ENCODE measurements at regions of chr14 and their contacts with region 1.

Region 1: DNA sequence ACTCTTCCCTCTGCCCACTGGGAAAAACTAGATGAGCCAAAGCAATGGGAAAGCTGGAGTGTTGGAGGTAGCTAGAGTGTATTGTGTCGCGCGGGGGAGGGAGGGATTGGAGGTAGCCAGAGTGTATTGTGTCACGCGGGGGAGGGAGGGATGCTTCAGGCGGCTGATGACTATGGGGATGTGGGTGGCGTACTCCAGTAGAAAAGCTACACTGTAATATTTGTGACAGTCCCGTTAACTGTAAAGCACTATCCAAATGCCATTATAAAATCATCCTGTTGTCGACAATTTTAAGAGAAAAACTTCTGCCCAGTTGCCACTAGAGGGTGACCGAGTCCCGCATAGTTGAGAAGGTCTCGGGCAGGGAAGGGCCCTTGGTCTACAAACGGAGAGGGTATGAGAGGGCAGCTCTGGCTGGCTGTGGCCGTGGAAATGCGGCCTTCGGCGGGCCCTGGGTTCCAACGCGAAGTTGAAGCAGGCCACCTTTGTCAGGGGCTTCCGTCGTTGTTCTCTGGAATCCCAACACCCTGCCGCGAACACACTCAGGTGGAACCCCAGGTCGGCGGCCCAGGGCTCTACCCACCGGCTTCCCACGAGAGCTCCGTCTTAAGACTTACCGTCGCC is 15.1 kb upstream of the PLEK2 start:
- DNase-seq: peak; percentile 75 to 86 (median 82)
- ATAC-seq: peak; percentile 88 to 94 (median 91)
- H3K4me3 ChIP-seq: no peak overlapping the region
- H3K27ac ChIP-seq: no peak overlapping the region
- H3K4me1 ChIP-seq: peaks cover 0 to 5% (median 0%) of the 10 kb centered on the region in 3 donors
- H3K27me3 ChIP-seq: no peaks in the 10 kb centered on the region
- CTCF ChIP-seq: peak; percentile 40 to 76 (median 69)

Region 2: DNA sequence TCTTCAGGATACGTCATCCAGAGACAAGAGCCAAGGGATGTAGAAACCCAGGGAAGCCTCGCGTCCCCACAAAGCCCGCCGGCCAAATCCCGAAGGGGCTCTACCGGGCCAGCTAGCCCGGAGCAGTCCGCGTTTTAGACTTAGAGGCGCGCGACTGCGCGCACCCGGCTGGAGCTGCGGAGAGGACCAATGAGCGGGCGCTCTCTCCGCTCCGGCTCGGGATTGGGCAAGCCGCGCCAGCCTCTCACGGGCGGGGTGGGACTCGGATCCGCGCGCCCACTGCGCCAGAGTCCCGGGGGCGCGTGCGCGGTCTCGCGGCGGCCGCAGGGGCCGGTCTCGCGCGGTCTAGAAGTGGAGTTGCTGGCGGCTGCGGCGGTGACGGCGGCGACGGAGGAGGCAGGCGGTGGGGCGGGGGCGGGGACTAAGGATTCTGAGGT is 186.1 kb before region 1 on chr14:
- intact Hi-C with region 1: no loop called
- DNase-seq: peak; percentile 95 to 98 (median 96)
- ATAC-seq: peak; percentile 93 to 97 (median 94)
- H3K4me3 ChIP-seq: peak overlapping the region; percentile 55 to 86 (median 76)
- H3K27ac ChIP-seq: peak overlapping the region; percentile 92 to 98 (median 97)
- H3K4me1 ChIP-seq: peaks cover 5 to 7% (median 7%) of the 10 kb centered on the region in 3 donors
- H3K27me3 ChIP-seq: no peaks in the 10 kb centered on the region
- CTCF ChIP-seq: no peak

Region 3: DNA sequence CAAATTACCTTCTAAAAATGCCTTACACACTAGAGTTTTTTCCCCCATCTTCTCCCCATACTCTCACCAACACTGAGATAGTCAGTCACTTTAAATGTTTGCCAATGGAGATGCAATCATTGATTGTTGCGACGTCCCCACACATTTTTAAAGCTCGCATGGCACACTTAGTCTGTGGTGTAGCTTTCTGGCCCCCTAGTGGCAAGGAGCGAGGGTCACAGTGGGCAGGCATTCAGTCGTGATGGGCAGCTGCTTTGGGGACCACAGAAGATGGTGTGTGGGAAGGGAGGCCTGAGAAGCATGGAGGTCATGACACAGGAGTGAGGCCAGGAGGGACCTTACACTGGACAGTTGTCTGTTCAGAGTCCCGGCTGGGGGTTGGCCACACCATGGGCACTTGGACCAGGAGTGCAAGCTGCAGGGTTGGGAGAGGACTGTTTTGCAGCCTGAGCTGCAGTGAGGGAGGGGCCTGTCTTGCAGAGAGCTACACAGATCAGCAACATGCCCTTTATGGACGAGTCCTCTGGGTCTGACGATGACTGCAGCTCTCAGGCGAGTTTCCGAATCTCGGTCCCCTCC is 144.3 kb after region 1 on chr14:
- intact Hi-C with region 1: loop called in 2 of 3 experiments (anchors 5 to 10 kb)
- DNase-seq: peak in 5 of 6 donors; percentile 30 to 77 (median 63)
- ATAC-seq: peak; percentile 63 to 86 (median 78)
- H3K4me3 ChIP-seq: no peak overlapping the region
- H3K27ac ChIP-seq: no peak overlapping the region
- H3K4me1 ChIP-seq: peaks cover 0 to 3% (median 0%) of the 10 kb centered on the region in 3 donors
- H3K27me3 ChIP-seq: no peaks in the 10 kb centered on the region
- CTCF ChIP-seq: peak; percentile 66 to 82 (median 70)

Region 4: GRCh38 chr14:68476212-68476907 is 1049.3 kb after region 1 on chr14:
- intact Hi-C with region 1: no loop called
- DNase-seq: peak in 4 of 6 donors; percentile 35 to 66 (median 58)
- ATAC-seq: peak; percentile 61 to 75 (median 67)
- H3K4me3 ChIP-seq: no peak overlapping the region
- H3K27ac ChIP-seq: peak overlapping the region; percentile 18 to 88 (median 57)
- H3K4me1 ChIP-seq: peaks cover 55 to 70% (median 58%) of the 10 kb centered on the region in 3 donors
- H3K27me3 ChIP-seq: no peaks in the 10 kb centered on the region
- CTCF ChIP-seq: no peak